ENCODE measurements at regions of chr11 and their contacts with region 1.

Region 1: DNA sequence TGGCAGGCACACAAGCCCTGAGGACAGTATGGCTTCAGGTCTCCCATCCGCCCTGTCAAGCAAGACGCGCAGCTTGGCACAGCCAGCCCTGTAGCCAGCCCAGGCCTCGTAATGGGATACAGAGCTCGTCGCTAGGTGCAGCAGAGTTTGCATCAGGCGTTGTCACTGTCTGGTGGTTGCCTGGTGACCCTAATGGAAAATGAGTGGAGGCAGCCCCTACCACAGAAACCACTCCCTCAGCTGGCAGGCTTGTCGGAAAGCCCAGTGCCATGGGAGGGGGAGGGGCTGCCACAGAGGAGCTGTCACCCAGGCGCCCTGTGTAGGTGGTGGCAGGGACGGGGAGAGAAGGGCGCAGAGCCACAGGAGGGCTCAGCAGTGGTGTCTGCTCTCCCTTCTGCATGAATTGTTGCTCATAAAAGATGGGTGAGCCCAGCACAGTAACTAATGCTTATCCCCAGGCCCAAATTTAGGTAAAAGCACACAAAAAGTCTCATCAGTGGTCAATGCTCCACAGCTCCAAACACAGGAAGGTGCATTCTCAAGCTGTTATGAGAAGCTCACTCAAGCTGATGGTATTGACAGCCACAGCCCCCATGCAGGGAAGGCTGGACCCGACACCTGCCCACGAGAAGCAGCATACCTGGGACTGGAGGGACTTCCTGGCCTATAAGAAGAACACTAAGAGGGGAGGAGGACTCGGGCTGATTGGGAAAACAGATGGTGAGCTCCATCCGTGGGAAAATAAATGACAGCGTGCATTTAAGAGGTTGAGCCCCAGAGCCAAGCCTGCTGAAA is 164.6 kb downstream of the ETS1 start:
- DNase-seq: peak; percentile 75
- ATAC-seq: peak; percentile 58

Region 2: GRCh38 chr11:128323381-128323780 is 99.4 kb before region 1 on chr11:
- intact Hi-C with region 1: no loop called
- DNase-seq: no peak
- ATAC-seq: peak; percentile 44

Region 3: DNA sequence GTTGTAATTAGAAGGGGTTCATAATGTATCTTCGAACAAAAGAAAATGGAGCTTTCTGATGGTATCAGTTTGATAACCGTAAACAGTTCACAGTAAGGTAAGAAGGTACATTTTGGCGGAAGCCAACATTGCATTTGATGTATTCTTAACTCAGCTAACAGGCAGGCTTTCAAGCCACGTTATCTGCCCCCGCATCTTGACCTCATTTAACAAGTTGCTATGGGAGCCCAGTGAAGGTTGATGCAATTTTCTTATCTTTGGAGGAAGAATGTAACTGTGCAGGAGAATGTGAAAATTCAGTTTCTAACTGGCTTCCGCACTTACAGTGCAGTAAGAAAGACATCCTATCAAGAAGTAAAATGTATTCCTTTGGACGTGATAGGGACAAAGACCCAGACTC is 54.0 kb after region 1 on chr11:
- intact Hi-C with region 1: no loop called
- DNase-seq: no peak
- ATAC-seq: no peak

Region 4: GRCh38 chr11:128548655-128549255 is 126.0 kb after region 1 on chr11:
- intact Hi-C with region 1: loop called (anchors 1 kb)
- DNase-seq: peak; percentile 83
- ATAC-seq: peak; percentile 81

Measured in Right ventricle myocardium inferior (tissue), 1 donor.